MCF 10A (cell line): ENCODE measurements at regions of chr4 and their contacts with region 1.

Region 1: DNA sequence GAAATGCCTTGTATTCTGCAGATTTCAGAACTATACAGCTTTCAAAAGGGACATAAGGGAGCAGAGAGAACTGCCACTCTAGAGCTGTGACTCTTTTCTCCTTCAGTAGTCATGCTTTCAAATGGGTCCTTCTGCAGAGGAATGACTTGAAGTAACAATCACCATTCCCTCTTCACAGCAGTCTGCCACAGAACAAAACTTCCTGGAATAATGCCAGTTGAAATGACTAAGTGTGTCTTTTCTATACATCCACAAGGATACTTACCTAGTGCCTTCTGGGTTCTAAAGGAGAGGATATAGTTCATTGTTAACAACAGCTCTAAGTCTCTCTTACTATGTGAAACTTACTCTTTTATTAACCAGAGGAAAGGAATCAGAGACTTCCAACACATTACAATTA is 515.4 kb upstream of the ATOH1 start:
- DNase-seq: peak; percentile 63
- H3K4me3 Mint-ChIP-seq: no peak overlapping the region
- H3K27ac Mint-ChIP-seq: no peak overlapping the region
- H3K4me1 Mint-ChIP-seq: peaks cover 12% of the 10 kb centered on the region
- H3K27me3 Mint-ChIP-seq: no peaks in the 10 kb centered on the region
- CTCF ChIP-seq: no peak

Region 2: GRCh38 chr4:93396272-93396671 is 83.1 kb after region 1 on chr4:
- CTCF ChIA-PET with region 1: no interaction called
- POLR2A ChIA-PET with region 1: no interaction called
- intact Hi-C with region 1: loop called (anchors 10 kb)
- DNase-seq: peak; percentile 79
- H3K4me3 Mint-ChIP-seq: no peak overlapping the region
- H3K27ac Mint-ChIP-seq: peak overlapping the region; percentile 52
- H3K4me1 Mint-ChIP-seq: peaks cover 7% of the 10 kb centered on the region
- H3K27me3 Mint-ChIP-seq: no peaks in the 10 kb centered on the region
- CTCF ChIP-seq: no peak